PC-3 (cell line): ENCODE measurements at regions of chr3 and their contacts with region 1.

Region 1: DNA sequence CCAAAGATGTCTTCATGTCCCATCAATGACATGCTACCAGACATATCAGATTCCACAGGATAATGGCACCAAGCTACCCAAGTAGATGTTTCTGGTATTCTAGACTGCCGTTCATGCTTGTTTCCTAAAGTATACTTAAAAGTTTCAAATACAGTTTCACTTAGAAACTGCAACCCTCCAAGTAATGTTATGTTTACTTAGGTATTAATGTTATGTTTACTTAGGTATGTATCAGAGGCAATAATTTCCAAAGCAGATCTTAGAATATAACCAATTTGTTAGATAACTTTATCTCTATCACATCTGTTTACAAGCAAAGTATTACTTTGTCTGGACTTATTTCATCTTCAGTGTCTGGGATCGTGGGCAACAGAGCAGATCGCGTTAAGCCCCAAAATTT is 23.8 kb downstream of the TRNT1 start:
- DNase-seq: peak; percentile 30
- ATAC-seq: peak; percentile 82
- H3K4me3 ChIP-seq: no peak overlapping the region
- H3K27ac ChIP-seq: no peak overlapping the region
- H3K4me1 ChIP-seq: peaks cover 14% of the 10 kb centered on the region
- H3K27me3 ChIP-seq: no peaks in the 10 kb centered on the region
- CTCF ChIP-seq: no peak

Region 2: GRCh38 chr3:3170998-3171397 is 20.4 kb after region 1 on chr3:
- CTCF ChIA-PET with region 1: no interaction called
- POLR2A ChIA-PET with region 1: no interaction called
- intact Hi-C with region 1: loop called (anchors 2 kb)
- DNase-seq: peak; percentile 58
- ATAC-seq: peak; percentile 69
- H3K4me3 ChIP-seq: no peak overlapping the region
- H3K27ac ChIP-seq: no peak overlapping the region
- H3K4me1 ChIP-seq: no peaks in the 10 kb centered on the region
- H3K27me3 ChIP-seq: no peaks in the 10 kb centered on the region
- CTCF ChIP-seq: peak; percentile 58

Region 3: DNA sequence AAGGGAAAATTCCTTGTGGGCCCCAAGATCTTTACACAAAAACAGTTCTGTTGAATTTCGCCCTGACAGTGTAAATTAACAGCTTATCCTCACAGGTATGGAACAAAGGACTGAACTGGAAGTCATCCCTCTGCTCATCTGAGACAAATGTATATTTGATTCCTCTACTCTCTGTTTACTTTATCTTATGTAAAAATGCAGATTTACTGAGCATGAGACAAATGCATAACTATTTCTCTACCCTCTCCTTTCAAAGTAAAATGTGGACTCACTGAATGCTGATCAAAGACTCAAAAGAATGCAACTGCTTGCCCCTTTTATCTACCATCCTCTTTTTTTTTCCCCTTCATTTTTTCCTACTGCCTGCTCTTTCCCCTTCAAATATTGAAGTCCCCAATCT is 127.5 kb after region 1 on chr3:
- CTCF ChIA-PET with region 1: no interaction called
- POLR2A ChIA-PET with region 1: no interaction called
- intact Hi-C with region 1: no loop called
- DNase-seq: no peak
- ATAC-seq: no peak
- H3K4me3 ChIP-seq: no peak overlapping the region
- H3K27ac ChIP-seq: no peak overlapping the region
- H3K4me1 ChIP-seq: no peaks in the 10 kb centered on the region
- H3K27me3 ChIP-seq: no peaks in the 10 kb centered on the region
- CTCF ChIP-seq: no peak

Region 4: DNA sequence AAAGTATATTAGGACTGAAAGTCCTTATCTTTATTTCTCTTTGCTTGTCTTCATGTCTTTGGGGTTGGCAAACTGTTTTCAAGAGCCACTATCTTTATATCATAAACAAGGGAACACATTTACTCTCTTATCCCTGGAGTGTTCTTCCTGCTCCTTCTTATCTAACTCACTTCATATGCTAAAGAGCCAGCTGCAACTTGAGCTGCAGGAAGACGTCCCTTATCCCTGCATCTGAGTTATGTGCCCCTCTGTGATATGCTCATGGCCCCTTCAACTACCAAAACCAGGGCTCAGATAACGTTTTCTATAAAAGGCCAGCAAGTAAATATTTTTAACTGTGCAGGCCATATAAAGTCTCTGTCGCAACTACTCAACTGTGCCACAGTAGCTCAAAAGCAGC is 166.0 kb after region 1 on chr3:
- CTCF ChIA-PET with region 1: no interaction called
- POLR2A ChIA-PET with region 1: no interaction called
- intact Hi-C with region 1: no loop called
- DNase-seq: no peak
- ATAC-seq: no peak
- H3K4me3 ChIP-seq: no peak overlapping the region
- H3K27ac ChIP-seq: no peak overlapping the region
- H3K4me1 ChIP-seq: no peaks in the 10 kb centered on the region
- H3K27me3 ChIP-seq: no peaks in the 10 kb centered on the region
- CTCF ChIP-seq: no peak